ENCODE measurements at regions of chr14 and their contacts with region 1.

Region 1: GRCh38 chr14:65206448-65207096 is 104.3 kb upstream of the MAX start:
- DNase-seq: no peak
- H3K4me3 Mint-ChIP-seq: peak overlapping the region; percentile 72
- H3K27ac Mint-ChIP-seq: peak overlapping the region; percentile 92
- H3K4me1 Mint-ChIP-seq: peaks cover 70% of the 10 kb centered on the region
- H3K27me3 Mint-ChIP-seq: no peaks in the 10 kb centered on the region

Region 2: DNA sequence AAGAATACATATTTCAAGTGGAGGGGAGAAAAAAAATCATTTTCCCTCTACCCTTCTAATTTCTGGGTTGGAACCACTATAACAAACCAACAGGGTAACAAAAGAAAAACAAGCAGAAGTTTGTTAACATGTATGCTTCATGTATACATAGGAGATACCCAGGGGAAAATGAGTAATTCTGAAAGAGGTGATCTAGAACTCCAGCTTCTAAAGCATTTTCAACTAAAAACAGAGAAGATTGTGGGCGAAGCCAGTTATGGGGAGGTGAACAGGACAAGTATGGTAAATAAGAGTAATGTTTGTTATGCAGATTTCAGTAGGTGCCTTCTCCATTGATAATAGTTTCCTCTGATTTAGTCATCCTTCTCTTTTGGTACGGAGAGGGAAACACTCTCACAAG is 203.2 kb before region 1 on chr14:
- intact Hi-C with region 1: loop called (anchors 1 kb)
- DNase-seq: no peak
- H3K4me3 Mint-ChIP-seq: no peak overlapping the region
- H3K27ac Mint-ChIP-seq: peak overlapping the region; percentile 79
- H3K4me1 Mint-ChIP-seq: peaks cover 39% of the 10 kb centered on the region
- H3K27me3 Mint-ChIP-seq: no peaks in the 10 kb centered on the region

Region 3: DNA sequence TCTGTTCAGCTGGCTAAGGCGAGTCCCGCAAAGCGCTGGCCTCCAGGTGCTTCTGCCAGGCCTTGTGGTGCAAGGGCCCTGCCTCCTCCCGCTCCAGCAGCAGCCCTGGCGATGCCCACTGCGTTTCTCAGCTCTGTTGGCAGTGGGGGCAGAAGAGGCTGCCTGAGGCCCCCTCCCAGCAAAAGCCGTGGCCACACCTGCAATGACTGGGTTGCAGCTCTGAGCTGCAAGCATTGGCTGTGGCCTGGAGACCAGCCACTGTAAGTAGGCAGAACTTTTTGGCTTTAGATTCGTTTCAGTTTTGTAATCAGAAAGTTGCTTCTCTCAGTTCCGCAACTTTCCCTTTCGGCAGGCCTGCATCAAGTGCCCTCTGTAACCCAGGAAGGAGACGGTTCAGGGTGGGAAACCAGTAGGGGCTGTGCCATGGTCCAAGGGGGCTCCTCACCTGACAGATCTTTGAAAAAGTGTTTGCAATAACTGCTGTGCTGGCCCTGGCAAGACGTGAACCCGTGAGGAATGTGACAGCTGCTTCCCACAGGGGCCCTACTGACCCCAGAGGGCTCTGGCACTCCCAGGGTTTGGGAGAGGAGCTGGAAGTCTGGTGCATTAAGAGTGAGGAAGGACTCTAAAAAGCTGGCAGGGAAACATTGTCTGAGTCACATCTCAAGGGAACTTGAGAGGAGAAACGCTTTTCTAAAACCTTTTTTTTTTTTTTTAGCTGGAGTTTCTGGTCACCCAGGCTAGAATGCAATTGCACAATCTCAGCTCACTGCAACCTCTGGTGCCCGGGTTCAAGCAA is 49.8 kb before region 1 on chr14:
- intact Hi-C with region 1: no loop called
- DNase-seq: no peak
- H3K4me3 Mint-ChIP-seq: no peak overlapping the region
- H3K27ac Mint-ChIP-seq: no peak overlapping the region
- H3K4me1 Mint-ChIP-seq: peaks cover 16% of the 10 kb centered on the region
- H3K27me3 Mint-ChIP-seq: peaks cover 2% of the 10 kb centered on the region

Region 4: DNA sequence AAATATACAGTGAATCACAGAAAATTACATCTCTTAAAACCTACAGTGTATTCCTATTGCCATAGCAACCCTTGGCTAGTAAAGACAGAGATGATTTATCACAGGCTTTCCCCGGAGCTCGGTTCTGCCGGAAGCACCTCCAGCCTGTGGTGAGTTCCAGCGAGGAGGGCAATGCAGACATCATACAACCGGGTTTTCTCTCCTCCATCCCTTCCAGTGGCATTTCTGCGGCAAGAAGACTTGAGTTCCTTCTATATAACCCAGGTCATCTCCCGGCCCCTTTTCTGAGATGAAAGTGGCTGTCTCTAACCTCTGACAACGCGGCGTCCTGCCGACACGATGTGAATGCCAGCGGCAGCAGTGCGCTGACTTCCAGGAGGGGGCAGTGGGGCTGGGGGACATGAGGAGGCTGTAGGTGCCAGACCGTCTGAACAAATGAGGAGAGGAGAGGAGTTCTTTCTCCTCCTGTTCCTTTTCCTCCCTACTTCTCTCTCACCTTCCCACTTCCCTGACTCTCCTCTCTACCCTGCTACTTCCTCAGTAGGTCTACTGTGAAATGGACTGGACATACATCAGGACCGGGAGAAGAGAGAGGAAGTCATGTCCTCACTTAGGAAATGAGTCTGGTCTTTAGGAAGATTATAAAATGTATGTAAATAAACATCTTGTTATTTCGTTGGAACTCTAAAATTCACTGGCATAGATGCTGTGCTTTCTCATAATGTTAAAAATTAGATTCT is 35.6 kb before region 1 on chr14:
- intact Hi-C with region 1: loop called (anchors 1 kb)
- DNase-seq: peak; percentile 49
- H3K4me3 Mint-ChIP-seq: peak overlapping the region; percentile 73
- H3K27ac Mint-ChIP-seq: peak overlapping the region; percentile 88
- H3K4me1 Mint-ChIP-seq: peaks cover 48% of the 10 kb centered on the region
- H3K27me3 Mint-ChIP-seq: no peaks in the 10 kb centered on the region

Region 5: DNA sequence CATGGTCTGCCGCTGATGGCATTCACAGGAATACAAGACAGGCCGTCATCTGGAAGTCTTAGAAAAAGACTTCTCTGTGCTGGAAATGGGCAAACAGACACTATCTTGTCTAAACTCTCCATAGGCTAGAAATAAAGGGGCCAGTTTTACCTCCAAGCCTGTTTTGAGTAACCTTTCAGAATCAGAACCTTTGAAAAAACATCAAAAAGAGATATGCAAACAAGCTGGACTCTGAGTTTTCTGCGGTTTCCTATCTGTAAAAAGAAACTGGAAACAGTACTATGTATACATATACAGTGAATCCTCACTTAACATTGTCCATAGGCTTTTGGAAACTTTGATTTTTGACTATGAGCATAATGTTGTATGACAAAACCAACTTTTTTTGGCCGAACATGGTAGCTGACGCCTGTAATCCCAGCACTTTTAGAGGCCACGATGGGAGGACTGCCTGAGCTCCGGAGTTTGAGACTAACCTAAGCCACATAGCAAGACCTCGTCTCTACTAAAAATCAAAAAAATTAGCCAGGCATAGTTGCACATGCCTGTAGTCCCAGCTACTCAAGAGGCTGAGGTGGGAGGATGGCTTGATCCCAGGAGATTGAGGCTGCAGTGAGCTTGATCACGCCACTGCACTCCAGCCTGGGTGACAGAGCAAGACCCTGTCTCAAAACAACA is 11.4 kb before region 1 on chr14:
- intact Hi-C with region 1: no loop called
- DNase-seq: no peak
- H3K4me3 Mint-ChIP-seq: no peak overlapping the region
- H3K27ac Mint-ChIP-seq: no peak overlapping the region
- H3K4me1 Mint-ChIP-seq: peaks cover 9% of the 10 kb centered on the region
- H3K27me3 Mint-ChIP-seq: peaks cover 3% of the 10 kb centered on the region

Region 6: DNA sequence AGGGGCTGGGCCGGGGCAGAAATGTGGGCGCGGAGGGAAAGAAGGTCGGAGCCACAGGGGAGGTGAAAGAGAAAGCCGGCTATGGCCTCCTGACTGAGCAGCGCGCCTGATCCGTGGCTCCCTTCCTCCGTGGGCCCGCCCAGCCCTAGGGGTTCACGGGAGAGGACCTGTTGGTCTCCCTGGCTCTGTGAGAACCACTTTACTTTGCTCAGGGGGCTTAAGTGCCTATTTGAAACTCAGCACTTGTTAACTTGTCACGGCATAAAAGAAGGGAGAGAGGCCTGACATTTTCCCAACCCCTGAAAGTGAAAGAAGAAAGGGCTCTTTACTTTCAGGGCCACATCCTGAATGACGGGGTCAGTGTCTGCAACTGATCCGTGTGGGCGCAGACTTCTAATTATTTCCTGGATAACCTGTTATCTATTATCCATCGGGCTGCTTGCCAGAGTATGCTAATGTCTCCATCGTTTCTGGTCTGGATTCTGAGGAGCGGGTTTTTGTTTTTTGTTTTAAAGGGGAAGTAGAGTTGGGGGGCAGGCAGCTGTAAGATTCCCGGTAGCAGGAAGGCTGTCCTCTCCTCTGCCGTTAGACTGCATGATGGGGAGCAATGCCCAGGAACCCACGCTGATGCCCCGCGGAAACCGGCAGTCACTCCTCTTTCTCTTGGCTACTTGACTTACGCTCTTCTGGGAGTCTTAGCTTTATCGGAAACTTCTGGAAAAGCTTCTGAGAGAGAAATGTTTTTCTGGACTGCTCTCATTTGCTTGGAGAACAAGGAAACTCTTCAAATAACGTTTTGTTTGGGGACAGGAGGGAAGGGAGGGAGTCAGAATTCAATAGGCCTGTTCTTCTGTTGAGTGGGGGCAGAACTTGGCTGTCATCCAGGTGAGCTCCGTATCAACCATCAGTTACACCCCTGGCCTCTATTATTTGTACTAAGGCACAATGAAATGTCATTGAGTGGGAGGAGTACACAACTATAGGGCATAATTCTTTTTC is 23.5 kb after region 1 on chr14:
- intact Hi-C with region 1: loop called (anchors 1 kb)
- DNase-seq: peak; percentile 34
- H3K4me3 Mint-ChIP-seq: peak overlapping the region; percentile 81
- H3K27ac Mint-ChIP-seq: peak overlapping the region; percentile 93
- H3K4me1 Mint-ChIP-seq: peaks cover 51% of the 10 kb centered on the region
- H3K27me3 Mint-ChIP-seq: peaks cover 2% of the 10 kb centered on the region

Region 7: GRCh38 chr14:65336191-65336591 is 129.6 kb after region 1 on chr14:
- intact Hi-C with region 1: loop called (anchors 1 kb)
- DNase-seq: peak; percentile 63
- H3K4me3 Mint-ChIP-seq: peak overlapping the region; percentile 91
- H3K27ac Mint-ChIP-seq: peak overlapping the region; percentile 96
- H3K4me1 Mint-ChIP-seq: peaks cover 59% of the 10 kb centered on the region
- H3K27me3 Mint-ChIP-seq: no peaks in the 10 kb centered on the region

Region 8: GRCh38 chr14:65478596-65478995 is 272.0 kb after region 1 on chr14:
- intact Hi-C with region 1: loop called (anchors 1 kb)
- DNase-seq: no peak
- H3K4me3 Mint-ChIP-seq: no peak overlapping the region
- H3K27ac Mint-ChIP-seq: peak overlapping the region; percentile 61
- H3K4me1 Mint-ChIP-seq: peaks cover 80% of the 10 kb centered on the region
- H3K27me3 Mint-ChIP-seq: no peaks in the 10 kb centered on the region

Measured in activated T-helper 1 cell treated with anti-CD3 and anti-CD28 coated beads, Interleukin-12 subunit alpha, Interleukin-12 subunit beta, Interleukin-2, Interleukin-4 antibody, amounts not matched to agents 30 ng/mL and 10 ng/mL and 1 ng/mL, durations not matched to agents 14 hours and 24 hours and 36 hours (primary cell).